K562 (cell line): ENCODE measurements at regions of chr18 and their contacts with region 1.

Region 1: DNA sequence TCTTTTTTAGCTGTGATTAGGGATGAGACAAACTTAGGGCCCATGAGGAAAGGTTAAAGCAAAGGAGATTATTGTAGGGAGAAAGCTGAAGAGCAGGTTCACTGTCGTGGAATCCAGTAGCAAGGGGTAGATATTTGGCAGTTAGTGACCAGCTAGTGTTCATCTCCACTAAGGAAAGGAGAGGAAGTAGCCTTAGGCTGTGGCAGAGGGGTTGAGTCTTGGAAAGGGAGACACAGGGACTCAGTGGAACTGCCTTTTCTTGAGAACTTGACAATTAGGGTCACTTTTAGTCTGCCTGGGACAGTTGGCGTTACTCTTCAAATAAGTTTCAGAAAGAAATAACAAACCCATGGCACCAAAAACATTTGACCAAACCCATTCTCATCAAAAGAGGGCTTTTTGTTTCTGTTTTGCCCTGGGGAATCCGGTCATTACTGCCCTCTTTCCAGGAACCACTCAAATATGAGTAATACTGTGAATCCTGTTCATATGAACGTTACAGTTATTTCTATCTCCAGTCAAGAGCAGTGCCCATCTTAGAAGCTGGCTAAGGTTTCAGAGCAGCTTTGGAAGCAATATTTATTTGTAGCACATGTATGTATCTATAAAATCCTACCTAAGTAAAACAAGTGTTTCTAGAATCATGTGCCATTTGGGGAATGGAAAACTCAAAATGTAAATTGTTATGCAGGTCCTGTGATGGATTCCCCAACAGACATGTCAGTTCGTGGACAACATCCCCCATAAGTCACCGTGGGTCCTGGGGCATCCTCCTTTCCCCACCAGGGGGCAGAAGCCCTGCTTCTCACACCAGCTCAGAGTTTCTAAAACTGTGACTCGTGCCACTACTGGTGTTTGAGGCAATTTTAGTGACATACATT is 77.3 kb upstream of the PHLPP1 start:
- DNase-seq: peak; percentile 69 to 71 (median 70)
- ATAC-seq: peak; percentile 95
- H3K4me3 ChIP-seq: no peak overlapping the region
- H3K27ac ChIP-seq: no peak overlapping the region
- H3K4me1 ChIP-seq: peaks cover 0 to 6% of the 10 kb centered on the region in 2 experiments; a peak in 3 of 5 replicates
- H3K27me3 ChIP-seq: no peaks in the 10 kb centered on the region
- CTCF ChIP-seq: peak; percentile 72 to 87 (median 78)
- EP300 ChIP-seq: no peak
- POLR2A ChIP-seq: no peak
- RAD21 ChIP-seq: peak; percentile 62 to 79

Region 2: GRCh38 chr18:62802523-62802922 is 164.5 kb after region 1 on chr18:
- CTCF ChIA-PET with region 1: no interaction called
- POLR2A ChIA-PET with region 1: no interaction called
- in situ Hi-C with region 1: no loop called
- intact Hi-C with region 1: loop called (anchors 10 kb)
- DNase-seq: no peak
- ATAC-seq: peak; percentile 53; the same call in 1 of the 3 replicates
- H3K4me3 ChIP-seq: no peak overlapping the region
- H3K27ac ChIP-seq: no peak overlapping the region
- H3K4me1 ChIP-seq: peaks cover 0 to 3% of the 10 kb centered on the region in 2 experiments; a peak in 2 of 5 replicates
- H3K27me3 ChIP-seq: no peaks in the 10 kb centered on the region
- CTCF ChIP-seq: peak in 1 of 3 experiments; percentile 36; a peak in 2 of 6 replicates
- EP300 ChIP-seq: no peak
- POLR2A ChIP-seq: no peak
- RAD21 ChIP-seq: peak in 1 of 2 experiments; percentile 54; a peak in 3 of 4 replicates

Region 3: GRCh38 chr18:62957885-62958472 is 319.9 kb after region 1 on chr18:
- CTCF ChIA-PET with region 1: no interaction called
- POLR2A ChIA-PET with region 1: no interaction called
- in situ Hi-C with region 1: no loop called
- intact Hi-C with region 1: loop called (anchors 2 kb)
- DNase-seq: peak in 1 of 4 experiments; percentile 55
- ATAC-seq: peak; percentile 93
- H3K4me3 ChIP-seq: no peak overlapping the region
- H3K27ac ChIP-seq: no peak overlapping the region
- H3K4me1 ChIP-seq: 0 out of 5 replicates have a peak, but pooled peaks cover 0 to 4% of the 10 kb centered on the region in 2 experiments
- H3K27me3 ChIP-seq: no peaks in the 10 kb centered on the region
- CTCF ChIP-seq: peak; percentile 42 to 51 (median 49)
- EP300 ChIP-seq: no peak
- POLR2A ChIP-seq: no peak
- RAD21 ChIP-seq: peak; percentile 49 to 70

Region 4: GRCh38 chr18:62982600-62983251 is 344.7 kb after region 1 on chr18:
- CTCF ChIA-PET with region 1: no interaction called
- POLR2A ChIA-PET with region 1: no interaction called
- in situ Hi-C with region 1: no loop called
- intact Hi-C with region 1: loop called (anchors 2 kb)
- DNase-seq: peak; percentile 38 to 63 (median 46)
- ATAC-seq: peak; percentile 84
- H3K4me3 ChIP-seq: no peak overlapping the region
- H3K27ac ChIP-seq: no peak overlapping the region
- H3K4me1 ChIP-seq: no peaks in the 10 kb centered on the region; a peak in 3 of 5 replicates
- H3K27me3 ChIP-seq: no peaks in the 10 kb centered on the region
- CTCF ChIP-seq: peak; percentile 56 to 74 (median 73)
- EP300 ChIP-seq: no peak
- POLR2A ChIP-seq: no peak
- RAD21 ChIP-seq: peak; percentile 69 to 85